ENCODE measurements at regions of chr13 and their contacts with region 1.

Region 1: GRCh38 chr13:101144808-101145419 is 271.4 kb downstream of the NALCN start:
- DNase-seq: no peak
- ATAC-seq: no peak
- H3K4me3 Mint-ChIP-seq: no peak overlapping the region
- H3K27ac Mint-ChIP-seq: no peak overlapping the region
- H3K4me1 Mint-ChIP-seq: peaks cover 18% of the 10 kb centered on the region
- H3K27me3 Mint-ChIP-seq: no peaks in the 10 kb centered on the region
- CTCF ChIP-seq: peak; percentile 64

Region 2: GRCh38 chr13:101111894-101112293 is 33.0 kb before region 1 on chr13:
- CTCF ChIA-PET with region 1: no interaction called
- POLR2A ChIA-PET with region 1: no interaction called
- DNase-seq: no peak
- ATAC-seq: no peak
- H3K4me3 Mint-ChIP-seq: no peak overlapping the region
- H3K27ac Mint-ChIP-seq: no peak overlapping the region
- H3K4me1 Mint-ChIP-seq: peaks cover 46% of the 10 kb centered on the region
- H3K27me3 Mint-ChIP-seq: no peaks in the 10 kb centered on the region; the same call in 1 of the 2 replicates
- CTCF ChIP-seq: no peak

Region 3: GRCh38 chr13:101127741-101128353 is 17.1 kb before region 1 on chr13:
- CTCF ChIA-PET with region 1: interaction called, 12 read pairs
- POLR2A ChIA-PET with region 1: no interaction called
- DNase-seq: no peak
- ATAC-seq: peak; percentile 87
- H3K4me3 Mint-ChIP-seq: no peak overlapping the region
- H3K27ac Mint-ChIP-seq: peak overlapping the region; percentile 82; the same call in 1 of the 2 replicates
- H3K4me1 Mint-ChIP-seq: peaks cover 23% of the 10 kb centered on the region
- H3K27me3 Mint-ChIP-seq: no peaks in the 10 kb centered on the region
- CTCF ChIP-seq: 0 out of 2 replicates have a peak, but pooled peaks have one; percentile 51

Region 4: DNA sequence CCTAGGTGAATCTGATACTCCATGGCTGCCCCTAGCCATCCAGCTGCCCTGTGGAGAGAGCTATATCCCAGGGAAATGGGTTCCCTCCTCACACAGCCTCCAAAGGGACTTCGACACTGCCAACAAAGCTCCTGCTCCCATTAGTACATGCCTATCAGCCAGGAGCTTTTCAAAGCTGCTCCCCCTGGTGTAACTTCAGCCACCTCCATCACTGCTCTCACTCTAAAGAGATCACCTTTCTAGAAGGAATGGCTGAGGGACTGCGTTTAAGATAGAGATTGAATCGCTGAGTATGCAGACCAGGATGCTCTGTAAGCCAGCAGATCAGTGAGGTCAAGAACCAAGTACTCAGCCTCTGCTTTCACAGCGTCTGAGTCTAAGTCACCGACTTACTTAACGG is 57.7 kb after region 1 on chr13:
- CTCF ChIA-PET with region 1: interaction called, 15 read pairs
- POLR2A ChIA-PET with region 1: no interaction called
- DNase-seq: peak; percentile 42
- ATAC-seq: peak; percentile 100
- H3K4me3 Mint-ChIP-seq: no peak overlapping the region
- H3K27ac Mint-ChIP-seq: no peak overlapping the region; the same call in 1 of the 2 replicates
- H3K4me1 Mint-ChIP-seq: peaks cover 2% of the 10 kb centered on the region; the same call in 1 of the 2 replicates
- H3K27me3 Mint-ChIP-seq: no peaks in the 10 kb centered on the region; the same call in 1 of the 2 replicates
- CTCF ChIP-seq: no peak

Region 5: DNA sequence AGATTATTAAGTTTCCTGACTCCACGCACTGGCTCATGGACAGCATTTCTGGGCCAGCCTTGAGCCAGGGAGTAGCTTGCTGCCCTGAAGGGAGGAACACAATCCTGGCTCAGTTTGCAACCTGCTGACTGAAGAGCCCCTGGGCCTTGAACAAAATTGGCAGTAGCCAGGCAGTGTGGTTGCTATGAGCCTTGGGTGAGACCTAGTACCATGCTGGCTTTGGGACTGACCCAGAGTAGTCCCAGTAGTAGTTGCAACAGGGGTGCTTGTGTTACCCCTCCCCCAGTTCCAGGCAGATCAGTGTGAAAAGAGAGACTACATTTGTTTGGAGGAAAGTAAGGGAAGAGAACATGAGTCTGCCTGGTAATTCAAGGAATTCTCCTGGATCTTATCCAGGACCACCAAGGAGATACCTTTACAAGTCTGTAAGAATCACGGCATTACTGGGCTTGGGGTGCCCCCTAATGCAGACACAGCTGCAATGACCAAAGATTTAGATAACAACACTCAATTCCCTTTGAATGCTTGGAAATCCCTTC is 329.6 kb after region 1 on chr13:
- CTCF ChIA-PET with region 1: interaction called, 27 read pairs
- POLR2A ChIA-PET with region 1: no interaction called
- DNase-seq: peak; percentile 73
- ATAC-seq: peak; percentile 91
- H3K4me3 Mint-ChIP-seq: no peak overlapping the region
- H3K27ac Mint-ChIP-seq: no peak overlapping the region
- H3K4me1 Mint-ChIP-seq: peaks cover 17% of the 10 kb centered on the region
- H3K27me3 Mint-ChIP-seq: no peaks in the 10 kb centered on the region
- CTCF ChIP-seq: no peak

Region 6: DNA sequence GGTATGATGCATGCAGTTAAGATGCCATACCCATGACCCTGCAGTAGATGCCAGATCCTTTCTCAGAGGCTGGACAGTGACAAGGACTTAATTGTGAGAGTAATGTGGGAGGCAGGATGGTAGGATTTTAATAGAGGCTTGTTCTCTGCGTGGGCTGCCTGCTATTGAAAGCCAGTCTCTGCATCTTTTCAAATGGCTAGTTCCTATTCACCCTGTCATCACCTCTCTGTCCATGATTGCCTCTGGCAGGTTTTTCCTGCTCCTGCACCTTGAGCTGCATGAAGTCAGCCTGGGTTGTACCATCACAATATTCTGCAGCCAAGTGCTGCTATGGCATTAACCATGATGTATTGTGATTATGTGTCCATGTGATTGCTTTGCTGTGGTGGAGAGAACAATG is 748.1 kb after region 1 on chr13:
- CTCF ChIA-PET with region 1: no interaction called
- POLR2A ChIA-PET with region 1: no interaction called
- DNase-seq: no peak
- ATAC-seq: no peak
- H3K4me3 Mint-ChIP-seq: no peak overlapping the region
- H3K27ac Mint-ChIP-seq: no peak overlapping the region
- H3K4me1 Mint-ChIP-seq: peaks cover 4% of the 10 kb centered on the region
- H3K27me3 Mint-ChIP-seq: no peaks in the 10 kb centered on the region
- CTCF ChIP-seq: no peak

Region 7: GRCh38 chr13:101942038-101942437 is 797.1 kb after region 1 on chr13:
- CTCF ChIA-PET with region 1: interaction called, 15 read pairs
- POLR2A ChIA-PET with region 1: no interaction called
- DNase-seq: peak; percentile 33
- ATAC-seq: peak; percentile 89
- H3K4me3 Mint-ChIP-seq: no peak overlapping the region
- H3K27ac Mint-ChIP-seq: no peak overlapping the region
- H3K4me1 Mint-ChIP-seq: 0 out of 2 replicates have a peak, but pooled peaks cover 3% of the 10 kb centered on the region
- H3K27me3 Mint-ChIP-seq: no peaks in the 10 kb centered on the region
- CTCF ChIP-seq: 0 out of 2 replicates have a peak, but pooled peaks have one; percentile 33